ENCODE measurements at regions of chr11 and their contacts with region 1.

Region 1: GRCh38 chr11:91248199-91248807 is 976.3 kb upstream of the FAT3 start:
- DNase-seq: peak; percentile 84
- ATAC-seq: no peak
- H3K4me3 ChIP-seq: no peak overlapping the region
- H3K27ac ChIP-seq: no peak overlapping the region
- H3K4me1 ChIP-seq: peaks cover 6% of the 10 kb centered on the region
- H3K27me3 ChIP-seq: no peaks in the 10 kb centered on the region
- CTCF ChIP-seq: peak; percentile 94

Region 2: DNA sequence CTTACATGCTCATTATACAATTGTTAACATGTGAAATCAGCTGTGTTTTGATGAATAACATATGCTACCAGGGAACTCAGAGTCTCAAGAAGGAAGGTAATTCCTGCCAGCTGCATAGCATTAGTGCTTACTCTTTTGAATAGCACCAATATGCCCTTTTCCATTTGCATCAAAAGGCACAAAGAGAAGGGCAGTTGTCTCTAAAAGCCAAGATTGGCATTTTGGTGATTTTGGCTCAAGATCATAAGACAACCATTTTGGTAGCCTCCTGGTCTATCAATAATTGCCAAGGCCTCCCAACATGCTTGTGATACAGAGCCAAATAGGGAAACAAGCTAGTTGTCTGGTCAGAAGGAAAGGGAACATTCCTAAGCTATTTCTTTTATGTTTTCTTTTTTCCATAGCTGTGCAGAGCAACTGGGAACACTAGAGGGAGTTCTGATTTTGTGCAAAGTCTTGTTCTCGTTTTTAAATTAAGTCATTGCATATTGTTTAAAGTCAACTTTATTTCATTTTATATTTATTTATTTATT is 608.8 kb before region 1 on chr11:
- CTCF ChIA-PET with region 1: no interaction called
- POLR2A ChIA-PET with region 1: no interaction called
- intact Hi-C with region 1: loop called (anchors 5 kb)
- DNase-seq: peak; percentile 56
- ATAC-seq: no peak
- H3K4me3 ChIP-seq: no peak overlapping the region
- H3K27ac ChIP-seq: no peak overlapping the region
- H3K4me1 ChIP-seq: no peaks in the 10 kb centered on the region
- H3K27me3 ChIP-seq: no peaks in the 10 kb centered on the region
- CTCF ChIP-seq: peak; percentile 65

Region 3: DNA sequence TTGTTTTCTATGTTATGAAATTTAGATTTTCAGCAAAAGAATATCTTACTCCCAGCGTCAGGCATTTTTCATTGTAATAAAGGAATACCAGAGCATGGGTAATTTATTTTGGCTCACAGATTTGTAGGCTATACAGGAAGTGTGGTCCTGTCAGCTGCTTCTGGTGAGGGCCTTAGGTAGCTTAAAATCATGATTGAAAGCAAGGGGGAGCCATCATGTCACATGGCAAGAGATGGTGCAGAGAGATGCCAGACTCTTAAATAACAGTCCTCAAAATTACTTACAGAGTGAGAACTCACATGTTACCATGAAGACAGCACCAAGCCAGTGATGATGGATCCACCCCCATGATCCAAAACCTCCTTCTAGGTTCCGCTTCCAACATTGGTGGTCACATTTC is 200.4 kb before region 1 on chr11:
- CTCF ChIA-PET with region 1: no interaction called
- POLR2A ChIA-PET with region 1: no interaction called
- intact Hi-C with region 1: loop called (anchors 10 kb)
- DNase-seq: no peak
- ATAC-seq: no peak
- H3K4me3 ChIP-seq: no peak overlapping the region
- H3K27ac ChIP-seq: no peak overlapping the region
- H3K4me1 ChIP-seq: no peaks in the 10 kb centered on the region
- H3K27me3 ChIP-seq: no peaks in the 10 kb centered on the region
- CTCF ChIP-seq: no peak

Region 4: DNA sequence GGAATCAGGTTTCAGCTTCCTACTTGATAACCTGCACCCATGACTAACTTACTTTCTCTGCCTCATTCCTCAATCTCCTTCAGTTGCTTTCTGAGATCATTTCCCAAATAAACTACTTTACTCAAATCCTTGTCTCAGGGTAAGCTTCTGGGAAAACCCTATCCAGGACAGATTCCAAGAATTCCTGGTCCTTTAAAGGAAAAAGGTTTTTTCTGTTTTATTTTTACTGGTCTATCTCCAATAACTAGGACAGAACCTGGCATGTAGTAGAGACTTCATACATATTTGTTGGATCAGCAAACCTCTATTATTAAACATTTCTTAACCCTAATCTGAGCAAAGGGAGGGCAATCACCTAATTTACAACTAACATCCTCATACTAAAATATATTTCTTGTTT is 114.9 kb before region 1 on chr11:
- CTCF ChIA-PET with region 1: no interaction called
- POLR2A ChIA-PET with region 1: no interaction called
- intact Hi-C with region 1: no loop called
- DNase-seq: no peak
- ATAC-seq: no peak
- H3K4me3 ChIP-seq: no peak overlapping the region
- H3K27ac ChIP-seq: no peak overlapping the region
- H3K4me1 ChIP-seq: no peaks in the 10 kb centered on the region
- H3K27me3 ChIP-seq: no peaks in the 10 kb centered on the region
- CTCF ChIP-seq: no peak

Region 5: DNA sequence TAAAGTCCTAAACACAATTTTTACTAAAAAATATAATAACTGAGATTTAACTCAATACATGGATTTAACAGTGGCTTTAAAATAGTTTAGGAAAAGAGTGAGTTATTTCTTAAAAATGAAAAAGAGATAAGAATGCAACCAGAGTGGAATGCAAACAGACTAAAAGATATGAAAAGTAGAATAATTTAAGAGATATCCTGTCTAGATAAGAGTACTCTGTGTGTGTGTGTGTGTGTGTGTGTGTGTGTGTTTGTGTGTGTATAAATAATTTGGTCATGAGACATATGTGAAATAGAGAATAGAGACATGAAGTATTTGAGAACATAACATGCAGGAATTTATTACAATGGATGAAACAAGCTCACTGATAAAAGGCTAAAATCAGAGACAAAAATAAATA is 38.6 kb before region 1 on chr11:
- CTCF ChIA-PET with region 1: no interaction called
- POLR2A ChIA-PET with region 1: no interaction called
- intact Hi-C with region 1: no loop called
- DNase-seq: no peak
- ATAC-seq: no peak
- H3K4me3 ChIP-seq: no peak overlapping the region
- H3K27ac ChIP-seq: no peak overlapping the region
- H3K4me1 ChIP-seq: no peaks in the 10 kb centered on the region
- H3K27me3 ChIP-seq: no peaks in the 10 kb centered on the region
- CTCF ChIP-seq: no peak

Region 6: GRCh38 chr11:92329646-92330045 is 1081.3 kb after region 1 on chr11:
- CTCF ChIA-PET with region 1: no interaction called
- POLR2A ChIA-PET with region 1: no interaction called
- intact Hi-C with region 1: no loop called
- DNase-seq: peak; percentile 59
- ATAC-seq: no peak
- H3K4me3 ChIP-seq: no peak overlapping the region
- H3K27ac ChIP-seq: no peak overlapping the region
- H3K4me1 ChIP-seq: peaks cover 5% of the 10 kb centered on the region; the same call in 1 of the 2 replicates
- H3K27me3 ChIP-seq: no peaks in the 10 kb centered on the region
- CTCF ChIP-seq: no peak